Activated CD8-positive, alpha-beta T cell treated with anti-CD3 and anti-CD28 coated beads, Interleukin-2, amount 10 ng/mL, durations not matched to agents 7 days and 5 days (primary cell): ENCODE measurements at regions of chr20 and their contacts with region 1.

Region 1: GRCh38 chr20:50070991-50071888 is 41.7 kb downstream of the UBE2V1 start:
- DNase-seq: peak; percentile 93
- ATAC-seq: peak; percentile 100
- H3K4me3 Mint-ChIP-seq: peak overlapping the region; percentile 39
- H3K27ac Mint-ChIP-seq: no peak overlapping the region
- H3K4me1 Mint-ChIP-seq: peaks cover 8% of the 10 kb centered on the region
- H3K27me3 Mint-ChIP-seq: peaks cover 2% of the 10 kb centered on the region

Region 2: GRCh38 chr20:49914307-49915089 is 156.7 kb before region 1 on chr20:
- CTCF ChIA-PET with region 1: interaction called, 14 read pairs
- POLR2A ChIA-PET with region 1: no interaction called
- DNase-seq: peak; percentile 43
- ATAC-seq: peak; percentile 3
- H3K4me3 Mint-ChIP-seq: peak overlapping the region; percentile 99
- H3K27ac Mint-ChIP-seq: peak overlapping the region; percentile 100
- H3K4me1 Mint-ChIP-seq: peaks cover 31% of the 10 kb centered on the region
- H3K27me3 Mint-ChIP-seq: no peaks in the 10 kb centered on the region

Region 3: GRCh38 chr20:49982346-49983122 is 88.7 kb before region 1 on chr20 and contains the start of gene SNAI1:
- CTCF ChIA-PET with region 1: interaction called, 408 read pairs
- POLR2A ChIA-PET with region 1: interaction called, 7 read pairs
- DNase-seq: peak; percentile 87
- ATAC-seq: peak; percentile 93
- H3K4me3 Mint-ChIP-seq: peak within 1 kb of the TSS; percentile 60
- H3K27ac Mint-ChIP-seq: peak within 1 kb of the TSS; percentile 25
- H3K4me1 Mint-ChIP-seq: peaks cover 31% of the 10 kb centered on the region
- H3K27me3 Mint-ChIP-seq: peaks cover 20% of the 10 kb centered on the region
- total RNA-seq, gene SNAI1: 0.37 to 0.47 TPM

Region 4: GRCh38 chr20:50012282-50013263 is 58.7 kb before region 1 on chr20:
- CTCF ChIA-PET with region 1: interaction called, 27 read pairs
- POLR2A ChIA-PET with region 1: no interaction called
- DNase-seq: no peak
- ATAC-seq: peak; percentile 48
- H3K4me3 Mint-ChIP-seq: no peak overlapping the region
- H3K27ac Mint-ChIP-seq: peak overlapping the region; percentile 37
- H3K4me1 Mint-ChIP-seq: peaks cover 14% of the 10 kb centered on the region
- H3K27me3 Mint-ChIP-seq: peaks cover 4% of the 10 kb centered on the region

Region 5: GRCh38 chr20:50085452-50086365 is 14.5 kb after region 1 on chr20:
- CTCF ChIA-PET with region 1: interaction called, 87 read pairs
- POLR2A ChIA-PET with region 1: interaction called, 3 read pairs
- DNase-seq: peak; percentile 54
- ATAC-seq: peak; percentile 83
- H3K4me3 Mint-ChIP-seq: peak overlapping the region; percentile 64
- H3K27ac Mint-ChIP-seq: peak overlapping the region; percentile 80
- H3K4me1 Mint-ChIP-seq: peaks cover 22% of the 10 kb centered on the region
- H3K27me3 Mint-ChIP-seq: no peaks in the 10 kb centered on the region

Region 6: DNA sequence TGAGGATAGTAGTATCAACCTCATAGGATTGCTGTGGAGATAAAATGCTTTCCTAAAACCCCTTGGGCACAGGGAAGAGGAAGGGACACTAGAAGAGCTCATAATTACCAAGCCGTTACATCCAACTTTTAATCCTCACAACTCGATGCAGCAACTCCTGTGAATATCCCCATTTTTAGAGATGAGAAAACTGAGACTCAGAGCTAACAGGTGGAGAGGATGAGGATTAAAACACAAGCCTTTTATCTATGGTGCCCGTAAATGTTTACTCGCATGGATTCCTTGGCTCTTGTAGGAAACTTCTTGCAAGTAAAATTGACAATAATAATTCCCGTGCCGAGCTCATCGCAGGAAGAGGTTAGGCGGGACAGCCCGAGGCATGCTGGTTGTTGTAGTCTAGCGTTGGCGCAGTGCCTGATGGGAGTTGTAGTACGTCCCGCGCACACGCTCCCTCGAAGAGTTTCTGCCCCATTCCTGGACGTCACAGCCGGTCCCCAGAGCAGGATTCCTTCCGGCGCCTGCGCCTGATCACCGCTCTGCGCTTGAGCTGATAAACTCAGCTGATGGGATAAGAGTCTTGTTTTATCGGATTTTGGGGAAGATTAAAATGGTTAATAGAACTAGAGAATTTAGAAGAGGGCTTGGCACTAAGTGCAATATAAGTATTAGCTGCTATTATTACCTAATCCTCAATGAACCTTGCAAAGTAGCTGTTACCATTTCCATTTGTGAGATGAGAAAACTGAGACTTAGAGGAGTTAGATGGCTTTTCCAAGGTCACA is 44.5 kb after region 1 on chr20:
- CTCF ChIA-PET with region 1: interaction called, 18 read pairs
- POLR2A ChIA-PET with region 1: interaction called, 3 read pairs
- DNase-seq: peak; percentile 93
- ATAC-seq: peak; percentile 75
- H3K4me3 Mint-ChIP-seq: peak overlapping the region; percentile 77
- H3K27ac Mint-ChIP-seq: peak overlapping the region; percentile 89
- H3K4me1 Mint-ChIP-seq: peaks cover 53% of the 10 kb centered on the region
- H3K27me3 Mint-ChIP-seq: no peaks in the 10 kb centered on the region

Region 7: GRCh38 chr20:50179507-50180016 is 108.3 kb after region 1 on chr20:
- CTCF ChIA-PET with region 1: interaction called, 16 read pairs
- POLR2A ChIA-PET with region 1: no interaction called
- DNase-seq: no peak
- ATAC-seq: no peak
- H3K4me3 Mint-ChIP-seq: no peak overlapping the region
- H3K27ac Mint-ChIP-seq: no peak overlapping the region
- H3K4me1 Mint-ChIP-seq: no peaks in the 10 kb centered on the region
- H3K27me3 Mint-ChIP-seq: peaks cover 15% of the 10 kb centered on the region

Region 8: DNA sequence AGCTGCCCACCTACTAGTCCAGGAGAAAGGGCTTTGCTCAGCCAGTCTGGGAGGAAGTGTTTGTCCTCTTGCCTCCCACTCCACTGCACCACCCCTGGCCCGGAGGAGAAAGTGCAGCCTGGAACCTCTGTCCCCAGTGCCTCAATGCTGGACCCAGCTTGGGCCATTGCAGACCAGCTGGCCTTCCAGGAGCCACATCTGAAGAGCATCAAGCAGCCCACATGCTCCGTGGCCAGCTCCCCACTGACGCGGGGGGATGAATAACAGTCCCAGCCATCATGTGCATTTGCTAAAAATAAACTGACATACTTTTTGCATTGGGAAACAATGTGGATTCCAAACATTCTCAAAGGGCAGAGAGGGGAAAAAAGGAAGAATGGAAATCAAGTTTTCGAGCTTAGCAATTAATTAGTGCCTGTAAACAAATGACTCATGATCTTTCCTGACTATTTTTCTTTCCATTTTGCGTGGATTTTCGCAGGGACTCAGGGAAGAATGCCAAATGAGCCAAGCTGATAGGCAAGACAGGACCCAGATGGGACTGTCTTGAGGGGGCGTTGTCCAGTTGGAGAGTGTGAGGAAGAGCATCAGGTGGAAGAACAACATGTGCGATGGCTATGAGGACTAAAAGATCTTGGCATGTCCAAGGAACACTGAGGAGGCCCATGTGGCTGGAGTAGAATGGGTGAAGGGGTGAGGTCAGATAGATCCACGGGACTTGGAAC is 153.5 kb after region 1 on chr20:
- CTCF ChIA-PET with region 1: no interaction called
- POLR2A ChIA-PET with region 1: no interaction called
- DNase-seq: no peak
- ATAC-seq: no peak
- H3K4me3 Mint-ChIP-seq: no peak overlapping the region
- H3K27ac Mint-ChIP-seq: no peak overlapping the region
- H3K4me1 Mint-ChIP-seq: peaks cover 25% of the 10 kb centered on the region
- H3K27me3 Mint-ChIP-seq: no peaks in the 10 kb centered on the region

Region 9: GRCh38 chr20:50663095-50663850 is 592.0 kb after region 1 on chr20:
- CTCF ChIA-PET with region 1: no interaction called
- POLR2A ChIA-PET with region 1: no interaction called
- DNase-seq: no peak
- ATAC-seq: no peak
- H3K4me3 Mint-ChIP-seq: no peak overlapping the region
- H3K27ac Mint-ChIP-seq: no peak overlapping the region
- H3K4me1 Mint-ChIP-seq: no peaks in the 10 kb centered on the region
- H3K27me3 Mint-ChIP-seq: peaks cover 8% of the 10 kb centered on the region